ENCODE measurements at regions of chr10 and their contacts with region 1.

Region 1: DNA sequence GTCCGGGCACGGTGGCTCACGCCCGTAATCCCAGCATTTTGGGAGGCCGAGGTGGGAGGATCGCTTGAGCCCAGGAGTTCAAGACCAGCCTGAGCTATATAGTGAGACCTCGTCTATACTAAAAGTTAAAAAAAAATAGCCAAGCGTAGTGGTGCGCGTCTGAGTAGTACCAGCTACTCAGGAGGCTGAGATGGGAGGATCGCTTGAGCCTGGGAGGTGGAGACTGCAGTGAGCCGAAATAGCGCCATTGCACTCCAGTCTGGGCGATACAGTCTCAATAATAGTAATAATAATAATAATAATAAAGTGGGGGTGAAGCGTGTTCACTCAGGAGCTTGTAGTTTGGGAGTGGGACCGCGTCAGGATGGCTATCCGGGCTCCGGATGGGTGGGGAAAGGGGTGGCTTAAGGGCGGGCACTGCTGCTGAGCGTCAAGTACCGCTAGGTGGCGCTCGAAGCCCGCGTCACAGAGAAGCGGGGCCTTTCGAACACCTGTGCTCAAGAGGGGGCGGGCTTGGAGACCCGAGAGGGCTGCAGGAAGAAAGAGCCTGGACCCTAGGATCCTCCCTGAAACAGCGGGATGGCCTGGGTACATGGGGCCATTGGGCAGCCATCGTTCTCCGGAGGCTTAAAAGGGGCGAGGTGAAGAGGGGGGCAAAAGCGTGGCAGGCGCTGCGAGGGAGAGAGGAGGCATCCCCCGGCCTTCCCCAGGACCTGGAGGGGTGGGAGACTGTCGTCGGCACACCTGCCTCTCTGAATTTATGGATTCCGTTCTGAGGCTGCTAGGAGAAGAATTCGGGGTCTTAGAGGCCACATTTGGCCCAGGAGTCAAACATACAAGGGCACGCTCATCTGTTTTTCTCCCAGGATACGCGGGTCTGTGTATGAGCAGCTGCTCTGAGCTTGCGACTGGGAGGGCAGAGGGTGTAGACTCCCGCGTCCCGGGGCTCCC is 14.5 kb downstream of the LBX1 start:
- DNase-seq: no peak
- ATAC-seq: peak; percentile 77

Region 2: DNA sequence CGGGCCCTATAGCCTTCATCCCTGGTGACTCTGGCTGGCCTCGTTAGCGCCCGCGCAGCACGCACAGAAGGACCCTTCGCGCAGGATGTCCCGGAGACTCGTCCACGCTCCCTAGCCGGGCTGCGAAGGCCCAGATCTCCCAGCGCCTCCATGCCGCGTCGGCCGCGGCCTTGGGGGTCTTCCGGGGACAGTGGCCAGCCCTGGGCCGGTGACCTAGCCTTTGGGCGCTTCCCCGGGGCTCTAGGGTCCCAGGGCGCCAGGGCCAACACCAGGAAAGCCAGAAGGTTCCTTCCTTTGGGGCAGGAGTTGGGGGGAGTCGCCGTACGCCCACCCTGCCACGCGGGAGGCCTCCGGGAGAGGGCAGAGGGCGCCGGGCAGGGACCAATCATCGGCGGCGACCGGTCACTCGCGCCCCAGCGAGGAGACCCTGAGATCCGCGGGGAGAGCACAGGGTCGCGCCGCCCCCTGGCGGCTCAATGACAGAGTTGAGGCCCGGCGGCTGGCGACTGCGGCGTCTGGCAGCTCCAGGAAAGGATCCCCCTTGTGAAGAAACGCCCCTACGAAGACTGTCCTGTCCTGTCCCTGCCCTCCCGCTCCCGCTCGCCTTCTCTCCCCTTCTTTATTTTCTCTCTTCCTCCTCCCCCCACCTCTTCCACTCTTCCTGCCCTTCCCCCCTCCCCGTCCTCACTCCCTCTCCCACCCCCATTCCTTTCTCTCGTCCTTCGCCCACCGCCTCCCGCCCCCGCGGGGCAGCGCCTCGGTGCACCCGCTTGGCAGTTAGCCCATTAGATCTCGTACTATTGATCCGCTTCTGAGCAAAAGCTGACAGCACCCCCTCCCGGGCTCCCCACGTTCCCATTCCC is 76.8 kb after region 1 on chr10:
- intact Hi-C with region 1: loop called (anchors 2 kb)
- DNase-seq: peak; percentile 80
- ATAC-seq: peak; percentile 75

Region 3: DNA sequence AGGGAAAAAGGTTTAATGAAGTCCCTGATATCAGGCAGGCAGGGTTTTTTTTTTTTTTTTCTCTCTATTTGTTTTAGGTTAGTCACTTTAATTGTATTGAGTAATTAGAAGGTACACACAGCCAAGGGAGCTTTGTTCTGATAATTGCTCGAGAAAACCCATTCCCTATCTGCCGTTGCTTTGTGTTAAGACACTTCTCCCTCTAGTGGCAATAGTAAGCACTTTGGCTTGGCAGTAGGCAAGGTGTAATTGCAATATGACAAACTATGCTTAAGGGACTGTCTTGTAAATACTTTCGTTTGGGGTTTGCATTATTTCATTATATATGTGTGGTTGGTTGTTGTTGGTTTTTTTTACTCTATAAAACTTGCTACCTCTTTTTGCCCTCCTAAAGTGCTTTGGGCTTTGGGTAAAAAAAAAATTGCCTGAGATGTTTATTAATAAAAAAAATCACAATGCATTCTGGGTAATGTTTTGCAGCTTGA is 252.6 kb after region 1 on chr10:
- intact Hi-C with region 1: loop called (anchors 1 kb)
- DNase-seq: no peak
- ATAC-seq: peak; percentile 71

Region 4: DNA sequence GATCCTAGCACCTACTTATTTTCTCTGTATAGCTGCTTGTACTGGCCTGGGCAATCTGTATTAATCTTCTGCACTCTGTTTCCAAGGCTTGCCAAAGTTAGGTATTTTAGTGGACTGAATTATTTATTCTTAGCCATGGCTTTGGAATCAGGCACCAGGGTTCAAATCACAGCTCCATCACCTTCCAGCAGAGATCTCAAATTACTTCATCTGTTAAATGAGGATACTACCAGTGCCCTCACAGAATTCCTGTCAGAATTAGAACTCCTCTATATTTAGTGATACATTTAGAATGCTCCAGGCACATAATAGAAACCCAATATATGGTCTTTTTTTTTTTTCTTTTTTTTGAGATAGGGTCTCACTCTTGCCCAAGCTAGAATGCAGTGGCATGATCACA is 823.7 kb after region 1 on chr10:
- intact Hi-C with region 1: no loop called
- DNase-seq: no peak
- ATAC-seq: no peak

Measured in Right ventricle myocardium inferior (tissue), 1 donor.